Caco-2 (cell line): ENCODE measurements at regions of chr20 and their contacts with region 1.

Region 1: DNA sequence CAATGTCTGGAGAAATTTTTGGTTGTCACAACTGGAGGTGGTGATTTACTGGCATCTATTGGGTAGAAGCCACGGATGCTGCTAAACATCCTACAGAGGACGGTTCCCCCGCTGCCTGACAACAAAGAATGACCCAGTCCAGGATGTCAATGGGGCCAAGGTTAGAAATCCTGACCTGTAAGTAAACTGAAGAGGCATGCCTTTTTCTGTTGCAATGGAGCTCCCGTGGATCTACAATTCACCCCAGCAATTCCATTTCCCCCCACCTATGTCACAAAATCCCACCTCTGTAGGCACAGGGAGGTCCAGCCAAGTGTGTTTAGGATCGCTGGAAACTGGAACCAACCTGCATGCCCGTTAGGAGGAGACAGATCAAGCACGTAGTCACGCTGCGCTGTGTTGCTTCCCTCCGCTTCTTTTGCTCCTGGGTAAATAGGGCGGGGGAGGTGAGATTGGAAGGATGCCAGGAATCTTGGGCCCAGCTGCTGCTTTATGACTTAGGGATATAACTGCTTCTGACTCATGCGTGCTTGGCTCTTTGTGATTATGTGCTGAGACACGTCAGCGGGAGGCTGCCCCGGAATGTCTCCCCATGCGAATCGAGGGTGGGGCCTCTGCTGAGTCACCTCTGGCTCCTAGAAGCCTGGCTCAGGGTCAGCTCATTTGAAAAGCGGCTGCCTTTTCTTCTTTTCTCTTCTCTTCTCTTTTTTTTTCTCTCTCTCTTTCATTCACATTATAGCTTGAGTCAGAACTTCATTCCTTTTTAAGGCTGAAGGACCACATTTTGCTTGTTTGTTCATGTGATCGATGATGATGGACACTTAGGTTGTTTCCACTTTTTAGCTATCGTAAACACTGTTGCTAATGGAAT is 12.4 kb upstream of the PEDS1 start:
- DNase-seq: peak; percentile 100
- H3K4me3 ChIP-seq: peak overlapping the region; percentile 36
- H3K4me3 Mint-ChIP-seq: peak overlapping the region; percentile 78
- H3K27ac Mint-ChIP-seq: peak overlapping the region; percentile 94
- H3K4me1 ChIP-seq: peaks cover 46% of the 10 kb centered on the region
- H3K4me1 Mint-ChIP-seq: peaks cover 25% of the 10 kb centered on the region
- H3K27me3 ChIP-seq: no peaks in the 10 kb centered on the region
- H3K27me3 Mint-ChIP-seq: no peaks in the 10 kb centered on the region
- CTCF ChIP-seq: peak in 1 of 2 experiments; percentile 23

Region 2: DNA sequence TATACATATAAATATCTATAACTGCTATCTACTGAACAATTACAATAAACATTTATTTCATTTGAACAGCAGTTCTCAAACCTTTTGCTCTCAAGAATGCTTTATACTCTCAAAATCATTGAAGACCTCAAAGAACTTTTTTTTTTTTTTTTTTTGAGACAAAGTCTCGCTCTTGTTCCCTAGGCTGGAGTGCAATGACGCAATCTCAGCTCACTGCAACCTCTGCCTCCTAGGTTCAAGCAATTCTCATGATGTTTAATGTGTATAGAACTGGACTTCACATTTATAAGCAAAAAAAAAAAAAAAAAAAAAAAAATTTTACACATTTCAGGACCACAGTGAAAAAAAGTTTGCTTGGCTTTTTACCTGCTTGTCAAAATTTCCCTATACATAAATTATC is 64.6 kb before region 1 on chr20:
- CTCF ChIA-PET with region 1: interaction called, 3 read pairs
- POLR2A ChIA-PET with region 1: interaction called, 14 read pairs
- intact Hi-C with region 1: no loop called
- DNase-seq: peak in 1 of 2 experiments; percentile 45
- H3K4me3 ChIP-seq: no peak overlapping the region
- H3K4me3 Mint-ChIP-seq: no peak overlapping the region
- H3K27ac Mint-ChIP-seq: peak overlapping the region; percentile 34
- H3K4me1 ChIP-seq: peaks cover 69% of the 10 kb centered on the region
- H3K4me1 Mint-ChIP-seq: peaks cover 45% of the 10 kb centered on the region
- H3K27me3 ChIP-seq: no peaks in the 10 kb centered on the region
- H3K27me3 Mint-ChIP-seq: no peaks in the 10 kb centered on the region
- CTCF ChIP-seq: no peak

Region 3: GRCh38 chr20:50110141-50110925 is 55.6 kb before region 1 on chr20:
- CTCF ChIA-PET with region 1: interaction called, 18 read pairs
- POLR2A ChIA-PET with region 1: interaction called, 38 read pairs
- intact Hi-C with region 1: loop called (anchors 1 kb)
- DNase-seq: peak; percentile 80
- H3K4me3 ChIP-seq: no peak overlapping the region
- H3K4me3 Mint-ChIP-seq: peak overlapping the region; percentile 96
- H3K27ac Mint-ChIP-seq: peak overlapping the region; percentile 57
- H3K4me1 ChIP-seq: peaks cover 62% of the 10 kb centered on the region
- H3K4me1 Mint-ChIP-seq: peaks cover 68% of the 10 kb centered on the region
- H3K27me3 ChIP-seq: no peaks in the 10 kb centered on the region
- H3K27me3 Mint-ChIP-seq: no peaks in the 10 kb centered on the region
- CTCF ChIP-seq: no peak

Region 4: DNA sequence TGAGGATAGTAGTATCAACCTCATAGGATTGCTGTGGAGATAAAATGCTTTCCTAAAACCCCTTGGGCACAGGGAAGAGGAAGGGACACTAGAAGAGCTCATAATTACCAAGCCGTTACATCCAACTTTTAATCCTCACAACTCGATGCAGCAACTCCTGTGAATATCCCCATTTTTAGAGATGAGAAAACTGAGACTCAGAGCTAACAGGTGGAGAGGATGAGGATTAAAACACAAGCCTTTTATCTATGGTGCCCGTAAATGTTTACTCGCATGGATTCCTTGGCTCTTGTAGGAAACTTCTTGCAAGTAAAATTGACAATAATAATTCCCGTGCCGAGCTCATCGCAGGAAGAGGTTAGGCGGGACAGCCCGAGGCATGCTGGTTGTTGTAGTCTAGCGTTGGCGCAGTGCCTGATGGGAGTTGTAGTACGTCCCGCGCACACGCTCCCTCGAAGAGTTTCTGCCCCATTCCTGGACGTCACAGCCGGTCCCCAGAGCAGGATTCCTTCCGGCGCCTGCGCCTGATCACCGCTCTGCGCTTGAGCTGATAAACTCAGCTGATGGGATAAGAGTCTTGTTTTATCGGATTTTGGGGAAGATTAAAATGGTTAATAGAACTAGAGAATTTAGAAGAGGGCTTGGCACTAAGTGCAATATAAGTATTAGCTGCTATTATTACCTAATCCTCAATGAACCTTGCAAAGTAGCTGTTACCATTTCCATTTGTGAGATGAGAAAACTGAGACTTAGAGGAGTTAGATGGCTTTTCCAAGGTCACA is 50.1 kb before region 1 on chr20:
- CTCF ChIA-PET with region 1: interaction called, 82 read pairs
- POLR2A ChIA-PET with region 1: interaction called, 38 read pairs
- intact Hi-C with region 1: loop called (anchors 1 kb)
- DNase-seq: peak; percentile 98
- H3K4me3 ChIP-seq: peak overlapping the region; percentile 43
- H3K4me3 Mint-ChIP-seq: peak overlapping the region; percentile 96
- H3K27ac Mint-ChIP-seq: peak overlapping the region; percentile 85
- H3K4me1 ChIP-seq: peaks cover 30% of the 10 kb centered on the region
- H3K4me1 Mint-ChIP-seq: peaks cover 44% of the 10 kb centered on the region
- H3K27me3 ChIP-seq: no peaks in the 10 kb centered on the region
- H3K27me3 Mint-ChIP-seq: no peaks in the 10 kb centered on the region
- CTCF ChIP-seq: no peak

Region 5: GRCh38 chr20:50120897-50121693 is 44.8 kb before region 1 on chr20:
- CTCF ChIA-PET with region 1: interaction called, 82 read pairs
- POLR2A ChIA-PET with region 1: interaction called, 38 read pairs
- intact Hi-C with region 1: loop called (anchors 1 kb)
- DNase-seq: peak; percentile 86 to 88
- H3K4me3 ChIP-seq: no peak overlapping the region
- H3K4me3 Mint-ChIP-seq: no peak overlapping the region
- H3K27ac Mint-ChIP-seq: peak overlapping the region; percentile 27
- H3K4me1 ChIP-seq: peaks cover 15% of the 10 kb centered on the region
- H3K4me1 Mint-ChIP-seq: peaks cover 18% of the 10 kb centered on the region
- H3K27me3 ChIP-seq: no peaks in the 10 kb centered on the region
- H3K27me3 Mint-ChIP-seq: no peaks in the 10 kb centered on the region
- CTCF ChIP-seq: peak; percentile 98 to 99

Region 6: DNA sequence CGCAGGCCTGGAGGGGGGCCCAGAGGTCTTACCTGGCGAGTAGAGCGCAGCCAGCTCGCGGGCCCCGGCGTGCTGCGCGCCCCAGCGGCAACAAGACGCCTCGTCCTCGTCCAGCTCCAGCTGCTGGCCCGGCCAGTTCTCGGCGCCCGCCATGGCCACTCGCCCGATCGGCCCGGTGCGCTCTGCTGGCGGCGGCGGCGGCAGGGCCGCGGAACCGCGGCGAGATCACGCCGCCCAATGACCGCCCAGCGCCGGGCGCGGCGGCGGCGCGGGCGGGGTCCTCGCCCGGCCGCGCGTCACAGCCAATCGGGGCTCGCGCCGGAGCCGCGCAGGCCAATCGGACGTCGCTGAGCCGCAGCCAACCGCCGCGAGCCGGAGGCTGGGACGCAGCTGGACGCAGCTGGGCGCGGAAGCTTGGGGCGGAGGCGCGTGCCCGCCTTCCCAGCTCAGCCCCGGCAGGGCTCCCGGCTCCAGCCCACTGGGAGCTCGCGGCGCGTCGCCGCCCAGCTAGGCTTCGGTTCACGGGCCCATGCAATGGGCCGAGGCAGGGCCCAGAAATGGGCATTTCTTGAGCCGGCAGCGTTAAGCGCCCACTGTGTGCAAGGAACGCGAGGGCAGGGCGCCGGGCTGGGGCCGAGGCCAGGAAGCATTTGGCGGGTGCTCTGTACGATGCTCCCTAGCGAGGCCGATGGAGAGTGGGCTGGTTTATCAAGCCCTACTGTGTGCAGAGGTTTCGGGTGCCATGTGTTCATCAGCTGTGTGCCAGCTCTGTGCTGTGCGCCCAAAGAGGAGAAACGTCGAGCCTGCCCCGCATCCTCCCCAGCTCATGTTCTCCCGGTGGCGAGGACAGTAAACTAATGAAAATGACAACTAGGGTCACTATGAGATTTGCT is 12.2 kb before region 1 on chr20 and contains the start of gene PEDS1:
- CTCF ChIA-PET with region 1: interaction called, 106 read pairs
- POLR2A ChIA-PET with region 1: interaction called, 142 read pairs
- intact Hi-C with region 1: loop called (anchors 1 kb)
- DNase-seq: peak; percentile 95 to 99
- H3K4me3 ChIP-seq: peak within 1 kb of the TSS; percentile 96
- H3K4me3 Mint-ChIP-seq: peak within 1 kb of the TSS; percentile 82
- H3K27ac Mint-ChIP-seq: peak within 1 kb of the TSS; percentile 91
- H3K4me1 ChIP-seq: peaks cover 32% of the 10 kb centered on the region
- H3K4me1 Mint-ChIP-seq: peaks cover 45% of the 10 kb centered on the region
- H3K27me3 ChIP-seq: no peaks in the 10 kb centered on the region
- H3K27me3 Mint-ChIP-seq: no peaks in the 10 kb centered on the region
- CTCF ChIP-seq: peak; percentile 0 to 5
- total RNA-seq, gene PEDS1: 78.3 and 84.1 TPM in 2 replicates

Region 7: DNA sequence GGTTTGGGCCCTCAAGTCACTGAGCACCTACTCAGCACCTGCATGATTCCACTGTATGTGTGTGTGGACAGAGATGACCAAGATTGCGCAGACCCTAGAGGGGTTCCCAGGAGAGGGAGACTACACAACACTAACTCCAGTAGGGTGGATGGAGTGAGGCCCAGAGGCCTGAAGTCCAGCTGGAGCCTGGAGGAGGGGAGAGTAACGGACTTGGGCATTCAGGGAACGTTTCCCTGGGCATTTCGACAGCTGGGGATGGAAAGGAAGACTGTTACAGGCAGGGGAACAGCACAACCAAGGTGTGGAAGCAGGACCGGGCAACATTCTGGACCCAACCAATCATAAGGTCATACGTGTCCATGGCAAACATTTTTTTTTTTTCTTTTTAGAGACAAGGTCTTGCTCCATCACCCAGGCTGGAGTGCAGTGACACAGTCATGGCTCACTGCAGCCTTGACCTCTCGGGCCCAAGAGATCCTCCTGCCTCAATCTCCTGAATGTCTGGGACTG is 13.6 kb after region 1 on chr20:
- CTCF ChIA-PET with region 1: interaction called, 14 read pairs
- POLR2A ChIA-PET with region 1: no interaction called
- intact Hi-C with region 1: no loop called
- DNase-seq: no peak
- H3K4me3 ChIP-seq: no peak overlapping the region
- H3K4me3 Mint-ChIP-seq: no peak overlapping the region
- H3K27ac Mint-ChIP-seq: peak overlapping the region; percentile 14
- H3K4me1 ChIP-seq: no peaks in the 10 kb centered on the region
- H3K4me1 Mint-ChIP-seq: peaks cover 7% of the 10 kb centered on the region
- H3K27me3 ChIP-seq: no peaks in the 10 kb centered on the region
- H3K27me3 Mint-ChIP-seq: no peaks in the 10 kb centered on the region
- CTCF ChIP-seq: peak in 1 of 2 experiments; percentile 50